ENCODE measurements at regions of chr6 and their contacts with region 1.

Region 1: DNA sequence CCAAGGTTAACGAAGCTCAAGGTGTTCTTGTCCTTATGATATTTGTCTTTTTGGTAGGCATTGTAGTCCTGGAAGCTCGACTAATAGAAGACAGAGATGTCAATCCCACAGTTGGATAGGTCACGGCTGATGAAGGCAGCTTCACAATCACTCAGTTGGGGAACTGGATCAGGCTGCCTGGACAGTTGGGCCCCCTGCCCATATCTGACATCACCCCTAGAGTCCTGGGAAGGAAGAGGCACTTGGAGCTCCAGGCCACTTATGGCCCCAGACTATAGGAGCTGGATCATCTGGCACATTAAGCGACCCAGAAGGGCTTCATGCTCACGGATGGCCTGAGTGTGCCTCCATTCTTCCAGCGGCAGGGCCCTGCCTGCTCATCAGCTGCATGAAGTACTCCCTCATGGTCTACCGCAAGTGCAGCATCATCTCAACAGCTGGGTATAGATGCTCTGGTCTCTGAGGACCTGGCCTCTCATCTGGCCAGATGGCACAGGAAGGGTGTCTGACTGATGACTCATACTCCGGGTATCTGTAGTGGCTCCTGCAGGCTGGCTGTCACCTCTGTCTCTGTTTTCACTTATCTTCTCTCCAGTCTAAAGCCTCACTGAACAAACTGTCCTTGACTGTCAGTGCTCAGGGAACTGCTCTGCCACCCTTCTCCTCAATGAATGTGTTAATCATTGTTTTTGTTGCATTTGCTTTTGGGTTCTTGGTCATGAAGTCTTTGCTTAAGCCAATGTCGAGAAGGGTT is 29.2 kb upstream of the SSR1 start:
- DNase-seq: peak in 1 of 2 experiments; percentile 37
- H3K4me3 ChIP-seq: no peak overlapping the region
- H3K27ac ChIP-seq: no peak overlapping the region
- H3K4me1 ChIP-seq: peaks cover 12% of the 10 kb centered on the region
- H3K27me3 ChIP-seq: no peaks in the 10 kb centered on the region
- CTCF ChIP-seq: no peak

Region 2: DNA sequence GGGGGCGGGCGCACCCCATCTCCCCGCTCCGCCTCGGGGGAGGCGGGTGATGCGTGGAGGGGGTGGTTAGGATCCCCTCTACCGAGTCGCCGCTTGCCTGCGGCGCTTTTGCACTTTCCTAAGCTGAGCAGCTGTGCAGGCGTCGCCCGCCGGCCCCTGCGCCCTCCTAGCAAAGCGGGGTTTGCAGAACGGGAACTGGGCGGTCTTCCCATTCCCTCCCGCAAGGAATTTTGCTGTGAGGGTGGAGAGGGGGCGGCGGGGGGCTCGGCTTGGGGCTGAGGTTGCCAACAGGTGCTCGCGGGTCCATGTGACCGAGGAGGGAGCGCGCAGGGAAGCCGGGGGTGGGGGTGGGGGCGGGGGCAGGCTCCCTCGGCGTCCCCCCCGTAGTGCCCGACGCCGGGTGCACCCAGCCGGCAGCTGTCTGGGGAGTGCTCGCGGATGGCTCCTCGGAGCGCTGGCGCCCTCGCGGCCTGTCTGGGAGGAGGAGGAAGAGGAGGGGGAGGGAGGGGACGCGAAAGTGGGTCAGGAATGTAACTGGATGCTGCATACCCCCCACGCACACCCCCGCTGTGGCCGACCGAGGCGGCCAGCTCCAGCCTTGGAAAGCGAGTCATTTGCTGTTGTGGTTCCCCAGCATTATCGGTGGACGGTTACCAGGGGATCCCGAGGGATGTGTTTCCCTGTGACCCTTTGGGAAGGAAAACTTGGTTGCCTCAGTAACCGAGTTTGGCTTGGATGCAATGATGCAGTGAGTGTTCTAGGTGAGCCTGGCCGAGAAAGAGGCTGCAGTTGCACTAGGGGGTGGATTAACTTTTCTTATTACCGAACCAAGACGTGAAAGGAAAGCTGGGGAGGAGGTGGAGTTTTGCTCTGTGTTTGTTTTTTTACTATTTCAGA is 289.8 kb before region 1 on chr6:
- CTCF ChIA-PET with region 1: no interaction called
- POLR2A ChIA-PET with region 1: no interaction called
- intact Hi-C with region 1: no loop called
- DNase-seq: peak; percentile 38 to 50
- H3K4me3 ChIP-seq: peak overlapping the region; percentile 67
- H3K27ac ChIP-seq: peak overlapping the region; percentile 93
- H3K4me1 ChIP-seq: peaks cover 18% of the 10 kb centered on the region
- H3K27me3 ChIP-seq: no peaks in the 10 kb centered on the region
- CTCF ChIP-seq: no peak

Region 3: GRCh38 chr6:7312616-7313504 is 29.3 kb before region 1 on chr6 and contains the start of gene SSR1:
- CTCF ChIA-PET with region 1: no interaction called
- POLR2A ChIA-PET with region 1: no interaction called
- intact Hi-C with region 1: loop called (anchors 1 kb)
- DNase-seq: peak; percentile 84 to 98
- H3K4me3 ChIP-seq: peak within 1 kb of the TSS; percentile 94
- H3K27ac ChIP-seq: peak within 1 kb of the TSS; percentile 97
- H3K4me1 ChIP-seq: peaks cover 22% of the 10 kb centered on the region
- H3K27me3 ChIP-seq: no peaks in the 10 kb centered on the region
- CTCF ChIP-seq: no peak
- total RNA-seq, gene SSR1: 104 and 118 TPM in 2 replicates

Region 4: GRCh38 chr6:7324520-7324919 is 17.6 kb before region 1 on chr6:
- CTCF ChIA-PET with region 1: no interaction called
- POLR2A ChIA-PET with region 1: no interaction called
- intact Hi-C with region 1: no loop called
- DNase-seq: no peak
- H3K4me3 ChIP-seq: no peak overlapping the region
- H3K27ac ChIP-seq: no peak overlapping the region
- H3K4me1 ChIP-seq: no peaks in the 10 kb centered on the region
- H3K27me3 ChIP-seq: no peaks in the 10 kb centered on the region
- CTCF ChIP-seq: no peak

Measured in PC-9 (cell line).